ENCODE measurements at regions of chr1 and their contacts with region 1.

Region 1: DNA sequence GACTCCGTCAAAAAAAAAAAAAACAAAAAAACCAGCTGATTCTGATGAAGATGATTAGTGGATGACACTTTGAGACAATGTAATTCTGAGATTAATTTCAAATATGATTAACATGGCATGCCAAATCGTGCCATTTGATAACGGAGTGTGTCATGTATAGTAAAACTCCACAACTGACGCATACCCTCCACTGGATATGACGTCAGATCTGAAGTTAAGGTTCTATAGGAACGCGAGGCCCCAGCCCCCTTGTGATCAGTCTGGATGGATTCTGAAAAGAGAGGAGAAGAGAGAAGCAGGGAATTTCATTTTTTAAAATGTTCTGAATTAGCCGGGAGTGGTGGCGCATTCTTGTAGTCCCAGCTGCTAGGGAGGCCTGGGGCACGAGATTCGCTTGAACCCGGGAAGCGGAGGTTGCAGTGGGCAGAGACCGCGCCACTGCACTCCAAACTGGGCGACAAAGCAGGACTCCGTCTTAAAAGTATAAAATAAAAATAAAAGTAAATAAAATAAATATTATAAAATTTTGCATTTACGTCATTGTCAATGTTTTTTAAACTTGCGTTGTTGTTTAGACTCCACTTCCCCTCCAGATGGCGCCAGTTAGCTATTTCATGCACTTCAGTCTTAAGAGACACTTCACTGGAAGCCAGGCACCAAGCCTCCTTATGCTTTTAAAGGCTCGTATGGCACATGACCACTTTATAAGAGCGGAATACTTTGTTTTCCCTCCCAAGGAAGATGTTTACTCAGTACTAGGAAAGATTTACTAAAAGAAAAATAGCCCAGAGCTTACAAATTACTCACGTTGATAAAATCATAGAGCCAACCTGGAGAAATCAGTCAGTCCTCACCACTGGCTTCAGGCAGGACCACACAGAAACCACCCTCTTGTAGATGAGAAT is 65.5 kb downstream of the UBE2U start:
- DNase-seq: no peak
- H3K4me3 ChIP-seq: no peak overlapping the region
- H3K27ac ChIP-seq: peak overlapping the region; percentile 48
- H3K4me1 ChIP-seq: peaks cover 13% of the 10 kb centered on the region
- H3K27me3 ChIP-seq: no peaks in the 10 kb centered on the region
- CTCF ChIP-seq: peak; percentile 36 to 90 (median 85)
- POLR2A ChIP-seq: no peak

Region 2: DNA sequence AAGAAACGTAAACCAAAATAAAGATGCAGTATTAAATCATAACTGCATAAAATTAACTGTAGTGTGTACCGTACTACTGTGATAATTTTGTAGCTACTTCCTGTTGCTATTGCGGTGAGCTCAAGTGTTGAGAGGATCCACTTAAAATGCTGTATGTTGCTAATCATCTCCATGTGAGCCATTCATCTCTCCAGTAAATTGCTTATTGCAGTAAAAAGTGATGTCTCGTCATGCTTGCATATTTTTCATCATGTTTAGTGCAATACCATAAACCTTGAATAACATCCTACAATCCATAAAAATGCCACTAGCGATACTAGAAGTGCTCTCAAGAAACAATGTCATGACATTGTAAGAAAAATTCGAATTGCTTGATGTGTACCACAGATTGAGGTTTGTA is 542.2 kb after region 1 on chr1:
- intact Hi-C with region 1: loop called (anchors 10 kb)
- DNase-seq: no peak
- H3K4me3 ChIP-seq: no peak overlapping the region
- H3K27ac ChIP-seq: no peak overlapping the region
- H3K4me1 ChIP-seq: no peaks in the 10 kb centered on the region
- H3K27me3 ChIP-seq: no peaks in the 10 kb centered on the region
- CTCF ChIP-seq: no peak
- POLR2A ChIP-seq: no peak

Measured in vagina (tissue), 2 donors.